ENCODE measurements at regions of chr4 and their contacts with region 1.

Region 1: GRCh38 chr4:2536193-2537010 is at the start of gene FAM193A:
- DNase-seq: peak; percentile 97 to 100 (median 99)
- H3K4me3 ChIP-seq: peak within 1 kb of the TSS; percentile 83 to 93 (median 83)
- H3K4me3 Mint-ChIP-seq: peak within 1 kb of the TSS; percentile 90 to 95
- H3K27ac ChIP-seq: peak within 1 kb of the TSS; percentile 89 to 98
- H3K27ac Mint-ChIP-seq: peak within 1 kb of the TSS; percentile 90 to 98 (median 96)
- H3K4me1 ChIP-seq: peaks cover 19 to 23% of the 10 kb centered on the region in 2 donors
- H3K4me1 Mint-ChIP-seq: peaks cover 23% of the 10 kb centered on the region
- H3K27me3 ChIP-seq: no peaks in the 10 kb centered on the region
- H3K27me3 Mint-ChIP-seq: peaks cover 1 to 2% (median 1%) of the 10 kb centered on the region in 3 donors
- CTCF ChIP-seq: no peak
- polyA plus RNA-seq, gene FAM193A: 0.66 to 11.8 (median 0.82) TPM

Region 2: DNA sequence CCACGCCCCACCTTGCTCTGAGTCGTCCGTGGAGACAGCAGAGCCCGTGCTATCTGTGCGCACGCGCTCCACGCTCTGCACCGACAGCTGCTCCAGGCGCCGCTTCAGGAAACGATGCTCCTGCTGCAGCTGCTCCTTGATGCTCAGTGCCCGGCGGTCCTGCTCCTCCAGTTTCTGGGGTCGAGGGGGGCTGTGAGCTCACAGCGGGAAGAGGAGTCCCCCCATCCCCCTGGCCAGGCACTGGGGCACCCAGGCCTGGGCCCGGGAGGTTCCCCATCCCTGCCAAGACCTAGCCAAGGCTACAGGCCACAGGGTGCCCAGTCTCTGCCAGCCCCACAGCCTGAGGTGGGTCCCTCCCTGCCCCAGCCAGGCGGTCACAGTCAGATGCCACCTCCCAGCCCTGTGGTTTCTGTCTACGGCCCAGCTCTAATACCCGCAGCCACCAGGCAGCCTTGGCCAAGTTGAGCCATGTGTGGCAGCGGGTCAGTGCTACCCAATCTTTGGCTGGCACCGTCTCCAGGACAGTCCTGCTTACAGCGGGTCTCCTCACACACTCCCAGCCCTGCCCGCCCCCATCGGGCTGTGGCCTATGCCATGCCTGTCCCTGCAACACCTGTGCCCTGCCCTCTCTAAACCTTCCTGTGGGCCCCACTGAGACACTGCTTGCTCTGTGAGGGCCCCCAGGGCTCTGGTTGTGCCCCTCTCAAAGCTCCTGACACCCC is 285.2 kb before region 1 on chr4:
- intact Hi-C with region 1: no loop called
- DNase-seq: no peak
- H3K4me3 ChIP-seq: no peak overlapping the region
- H3K4me3 Mint-ChIP-seq: no peak overlapping the region
- H3K27ac ChIP-seq: no peak overlapping the region
- H3K27ac Mint-ChIP-seq: peak overlapping the region in 2 of 7 donors; percentile 6 to 20
- H3K4me1 ChIP-seq: no peaks in the 10 kb centered on the region
- H3K4me1 Mint-ChIP-seq: no peaks in the 10 kb centered on the region
- H3K27me3 ChIP-seq: no peaks in the 10 kb centered on the region
- H3K27me3 Mint-ChIP-seq: no peaks in the 10 kb centered on the region
- CTCF ChIP-seq: no peak

Region 3: DNA sequence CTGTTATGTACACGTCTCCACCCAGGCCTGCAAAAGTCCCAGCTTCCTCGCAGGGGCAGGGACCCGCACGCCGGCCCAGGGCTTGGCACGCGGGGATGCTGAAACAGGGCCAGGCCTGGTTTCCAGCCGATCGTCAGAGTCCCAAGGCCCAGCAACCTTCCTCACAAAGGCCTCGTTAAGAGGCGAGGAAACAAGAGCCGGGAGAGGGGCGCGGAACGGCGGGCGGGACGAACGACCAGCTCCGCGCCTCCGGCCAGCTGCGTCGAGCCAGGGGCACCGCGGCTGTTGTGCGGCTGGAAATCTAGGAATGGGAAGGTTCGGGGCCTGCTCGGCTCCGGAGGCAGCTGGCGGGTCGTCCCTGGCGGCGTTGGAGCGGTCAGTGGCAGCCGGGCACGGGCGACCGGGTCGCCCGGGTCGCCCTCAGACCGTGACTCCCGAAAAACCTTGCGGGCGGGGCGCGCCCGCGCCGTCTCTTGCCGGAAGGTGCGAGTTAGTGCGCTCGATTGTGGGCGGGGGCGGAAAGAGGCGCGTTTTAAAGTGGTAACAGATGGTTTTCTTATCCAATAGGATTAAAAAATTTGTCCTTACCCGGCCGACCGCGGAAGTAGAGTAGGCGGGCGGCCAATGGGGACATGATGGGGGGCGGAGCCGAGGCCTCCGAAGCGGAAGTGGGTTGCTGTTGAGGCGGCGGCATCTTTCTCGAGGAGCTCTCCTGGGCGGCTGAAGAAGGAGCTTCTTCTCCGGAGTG is 67.8 kb before region 1 on chr4 and contains the start of gene RNF4:
- intact Hi-C with region 1: loop called (anchors 2 kb)
- DNase-seq: peak; percentile 95
- H3K4me3 ChIP-seq: peak within 1 kb of the TSS; percentile 80 to 97 (median 83)
- H3K4me3 Mint-ChIP-seq: peak within 1 kb of the TSS; percentile 92 to 96
- H3K27ac ChIP-seq: peak within 1 kb of the TSS; percentile 84 to 91
- H3K27ac Mint-ChIP-seq: peak within 1 kb of the TSS; percentile 91 to 97 (median 93)
- H3K4me1 ChIP-seq: peaks cover 14 to 29% of the 10 kb centered on the region in 2 donors
- H3K4me1 Mint-ChIP-seq: peaks cover 35% of the 10 kb centered on the region
- H3K27me3 ChIP-seq: peaks cover 2 to 4% of the 10 kb centered on the region in 2 donors
- H3K27me3 Mint-ChIP-seq: peaks cover 4 to 10% (median 9%) of the 10 kb centered on the region in 3 donors
- CTCF ChIP-seq: no peak
- polyA plus RNA-seq, gene RNF4: 28.8 to 41.3 (median 37.0) TPM

Region 4: DNA sequence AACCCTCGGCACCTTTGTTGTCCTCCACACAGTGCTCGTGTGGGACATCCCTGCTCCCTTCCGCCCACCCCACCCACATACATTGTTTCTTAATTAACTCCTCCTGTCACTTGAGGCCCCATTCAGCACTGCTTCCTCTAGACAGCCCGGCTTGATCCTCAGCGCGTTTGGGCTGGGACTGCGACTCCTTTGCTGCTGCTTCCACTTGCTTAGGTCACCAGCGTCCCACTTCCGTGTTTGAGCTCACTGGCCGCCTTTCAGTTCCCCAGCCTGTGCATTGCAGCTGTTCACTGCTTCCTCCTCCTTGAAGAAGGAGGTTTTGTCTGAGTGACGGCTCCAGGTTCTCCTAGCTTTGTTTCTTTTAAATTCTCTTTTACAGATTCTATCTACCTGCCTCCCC is 51.4 kb before region 1 on chr4:
- intact Hi-C with region 1: loop called in 1 of 2 experiments (anchors 5 kb)
- DNase-seq: peak; percentile 86 to 93 (median 90)
- H3K4me3 ChIP-seq: peak overlapping the region; percentile 6 to 65 (median 14)
- H3K4me3 Mint-ChIP-seq: peak overlapping the region; percentile 69 to 88
- H3K27ac ChIP-seq: peak overlapping the region; percentile 45 to 78
- H3K27ac Mint-ChIP-seq: peak overlapping the region; percentile 90 to 97 (median 96)
- H3K4me1 ChIP-seq: peaks cover 73 to 77% of the 10 kb centered on the region in 2 donors
- H3K4me1 Mint-ChIP-seq: peaks cover 81% of the 10 kb centered on the region
- H3K27me3 ChIP-seq: no peaks in the 10 kb centered on the region
- H3K27me3 Mint-ChIP-seq: peaks cover 0 to 1% (median 0%) of the 10 kb centered on the region in 3 donors
- CTCF ChIP-seq: no peak

Region 5: GRCh38 chr4:2583517-2583916 is 47.1 kb after region 1 on chr4:
- intact Hi-C with region 1: no loop called
- DNase-seq: no peak
- H3K4me3 ChIP-seq: no peak overlapping the region
- H3K4me3 Mint-ChIP-seq: no peak overlapping the region
- H3K27ac ChIP-seq: peak overlapping the region in 1 of 2 donors; percentile 51
- H3K27ac Mint-ChIP-seq: peak overlapping the region in 5 of 7 donors; percentile 21 to 83 (median 25)
- H3K4me1 ChIP-seq: no peaks in the 10 kb centered on the region
- H3K4me1 Mint-ChIP-seq: peaks cover 28% of the 10 kb centered on the region
- H3K27me3 ChIP-seq: no peaks in the 10 kb centered on the region
- H3K27me3 Mint-ChIP-seq: no peaks in the 10 kb centered on the region
- CTCF ChIP-seq: no peak

Region 6: DNA sequence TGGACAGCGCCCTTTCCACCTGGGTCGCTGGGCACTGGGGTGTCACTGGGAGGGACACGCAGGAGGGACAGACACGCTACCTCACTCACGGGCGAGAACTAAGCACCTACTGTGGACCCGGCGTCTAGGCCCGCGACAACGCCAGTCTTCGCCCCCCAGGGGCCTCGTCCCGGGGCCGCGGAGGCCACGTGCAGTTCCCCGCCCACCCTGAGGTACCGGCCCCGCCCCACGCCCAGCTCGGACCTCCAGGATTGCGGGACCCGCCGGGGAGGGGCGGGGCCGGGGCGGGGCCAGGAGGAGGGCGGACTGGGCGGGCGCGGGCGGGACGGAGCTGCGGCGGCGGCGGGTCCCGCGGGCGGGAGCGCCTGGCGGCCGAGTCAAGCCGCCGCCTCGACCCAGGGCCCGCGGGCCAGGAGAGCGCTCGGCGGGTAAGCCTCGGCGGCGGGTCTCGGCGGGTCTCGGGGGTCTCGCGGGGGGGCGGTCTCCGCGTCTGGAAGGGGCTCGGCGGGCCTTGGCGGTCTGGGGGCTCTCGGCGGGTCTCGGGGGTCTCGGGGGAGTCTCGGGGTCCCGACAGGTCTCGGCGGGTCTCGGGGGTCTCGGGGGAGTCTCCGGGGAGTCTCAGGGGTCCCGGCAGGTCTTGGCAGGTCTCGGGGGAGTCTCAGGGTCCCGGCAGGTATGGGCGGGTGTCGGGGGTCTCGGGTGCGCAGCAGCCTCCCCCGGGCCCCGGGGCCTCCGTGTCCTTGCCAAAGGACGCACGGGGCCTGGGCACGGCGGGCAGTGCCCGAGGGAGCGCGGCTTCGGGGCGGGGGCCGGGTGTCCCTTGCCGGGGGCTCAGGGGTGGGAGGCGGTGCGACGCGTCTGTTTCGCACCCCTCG is 256.5 kb after region 1 on chr4 and contains the start of gene SH3BP2:
- intact Hi-C with region 1: no loop called
- DNase-seq: peak; percentile 66 to 78 (median 69)
- H3K4me3 ChIP-seq: peak within 1 kb of the TSS; percentile 63 to 99 (median 65)
- H3K4me3 Mint-ChIP-seq: peak within 1 kb of the TSS; percentile 93 to 95
- H3K27ac ChIP-seq: peak within 1 kb of the TSS; percentile 96 to 99
- H3K27ac Mint-ChIP-seq: peak within 1 kb of the TSS; percentile 90 to 97 (median 93)
- H3K4me1 ChIP-seq: peaks cover 88 to 90% of the 10 kb centered on the region in 2 donors
- H3K4me1 Mint-ChIP-seq: peaks cover 81% of the 10 kb centered on the region
- H3K27me3 ChIP-seq: no peaks in the 10 kb centered on the region
- H3K27me3 Mint-ChIP-seq: peaks cover 0 to 5% (median 2%) of the 10 kb centered on the region in 3 donors
- CTCF ChIP-seq: no peak
- polyA plus RNA-seq, gene SH3BP2: 19.1 to 478 (median 26.9) TPM